ENCODE measurements at regions of chr7 and their contacts with region 1.

Region 1: GRCh38 chr7:47945261-47946001 is 2.8 kb downstream of the PKD1L1 start:
- DNase-seq: peak; percentile 42 to 79 (median 48)
- ATAC-seq: peak; percentile 85
- H3K4me3 ChIP-seq: no peak overlapping the region
- H3K27ac ChIP-seq: no peak overlapping the region
- H3K4me1 ChIP-seq: no peaks in the 10 kb centered on the region; a peak in 1 of 5 replicates
- H3K27me3 ChIP-seq: peaks cover 10 to 45% of the 10 kb centered on the region in 2 experiments; a peak in 4 of 5 replicates
- CTCF ChIP-seq: peak; percentile 62 to 79 (median 66)
- EP300 ChIP-seq: no peak
- POLR2A ChIP-seq: no peak
- RAD21 ChIP-seq: peak; percentile 84 to 89

Region 2: DNA sequence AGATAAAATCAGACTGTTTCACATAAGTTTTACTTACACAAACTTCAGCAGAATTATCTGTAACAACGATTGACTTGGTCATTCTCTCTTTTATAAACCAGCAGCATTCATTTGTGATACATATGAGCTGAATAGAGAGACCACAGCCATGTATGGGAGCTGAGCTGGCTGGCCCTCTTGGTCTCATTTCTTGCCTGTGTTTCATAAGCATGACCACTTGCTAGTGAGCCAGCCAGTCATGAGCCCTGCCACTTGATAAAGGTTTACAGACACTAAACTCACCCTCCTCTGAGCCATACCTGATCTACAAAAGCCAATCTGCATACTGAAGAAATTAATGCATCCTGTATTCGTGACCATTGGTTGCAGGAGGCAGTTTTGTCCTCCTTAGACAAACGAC is 79.3 kb before region 1 on chr7:
- CTCF ChIA-PET with region 1: no interaction called
- POLR2A ChIA-PET with region 1: no interaction called
- in situ Hi-C with region 1: no loop called
- intact Hi-C with region 1: no loop called
- DNase-seq: no peak
- ATAC-seq: no peak
- H3K4me3 ChIP-seq: no peak overlapping the region
- H3K27ac ChIP-seq: no peak overlapping the region
- H3K4me1 ChIP-seq: no peaks in the 10 kb centered on the region
- H3K27me3 ChIP-seq: peaks cover 3 to 11% of the 10 kb centered on the region in 2 experiments; a peak in 3 of 5 replicates
- CTCF ChIP-seq: no peak
- EP300 ChIP-seq: no peak
- POLR2A ChIP-seq: no peak
- RAD21 ChIP-seq: no peak

Region 3: DNA sequence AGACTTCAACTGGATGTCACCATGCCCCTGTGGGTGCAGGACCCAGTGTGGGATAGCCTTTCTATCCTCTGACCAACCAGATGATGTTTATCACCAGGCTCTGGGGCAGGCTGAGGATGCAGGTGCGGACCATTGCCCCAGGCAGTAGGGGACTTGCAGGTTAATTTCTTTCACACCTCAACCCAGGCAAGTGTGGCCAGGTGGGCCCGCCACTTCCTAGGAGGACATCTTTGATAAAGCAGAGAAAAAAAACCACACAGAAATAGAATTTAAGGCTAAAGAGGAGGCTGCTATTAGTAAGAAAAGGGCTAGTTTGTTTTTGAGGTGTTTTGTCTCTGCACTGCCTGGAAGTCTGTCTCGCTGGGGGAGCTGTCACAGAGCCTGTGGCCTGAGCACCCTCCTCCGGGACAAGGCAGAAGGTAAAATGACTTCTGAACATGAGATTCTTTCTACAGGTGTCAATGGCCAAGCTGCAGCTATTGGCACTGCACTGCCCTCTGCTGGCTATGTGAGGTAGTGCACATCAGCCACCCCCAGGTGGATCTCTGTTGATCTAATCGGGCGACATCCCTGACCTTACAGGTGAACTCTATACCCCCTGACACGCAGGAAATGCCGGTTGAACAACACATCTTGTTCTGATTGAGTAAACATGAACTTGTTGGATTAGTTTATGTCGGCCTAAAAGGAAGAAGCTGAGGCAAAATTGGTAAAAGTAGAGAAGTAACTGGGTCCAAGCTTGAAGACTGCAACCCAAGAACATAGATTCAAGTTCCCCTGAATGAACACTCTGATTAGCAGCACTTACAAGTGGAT is 164.6 kb after region 1 on chr7:
- CTCF ChIA-PET with region 1: interaction called, 39 read pairs
- POLR2A ChIA-PET with region 1: interaction called, 3 read pairs
- in situ Hi-C with region 1: loop called (anchors 5 kb)
- intact Hi-C with region 1: loop called (anchors 1 kb)
- DNase-seq: peak; percentile 67 to 84 (median 75)
- ATAC-seq: peak; percentile 82
- H3K4me3 ChIP-seq: no peak overlapping the region
- H3K27ac ChIP-seq: no peak overlapping the region
- H3K4me1 ChIP-seq: peaks cover 0 to 4% of the 10 kb centered on the region in 2 experiments; a peak in 1 of 5 replicates
- H3K27me3 ChIP-seq: peaks cover 0 to 33% of the 10 kb centered on the region in 2 experiments; a peak in 2 of 5 replicates
- CTCF ChIP-seq: peak; percentile 83 to 95 (median 90)
- EP300 ChIP-seq: no peak
- POLR2A ChIP-seq: no peak
- RAD21 ChIP-seq: peak; percentile 93 to 97

Region 4: DNA sequence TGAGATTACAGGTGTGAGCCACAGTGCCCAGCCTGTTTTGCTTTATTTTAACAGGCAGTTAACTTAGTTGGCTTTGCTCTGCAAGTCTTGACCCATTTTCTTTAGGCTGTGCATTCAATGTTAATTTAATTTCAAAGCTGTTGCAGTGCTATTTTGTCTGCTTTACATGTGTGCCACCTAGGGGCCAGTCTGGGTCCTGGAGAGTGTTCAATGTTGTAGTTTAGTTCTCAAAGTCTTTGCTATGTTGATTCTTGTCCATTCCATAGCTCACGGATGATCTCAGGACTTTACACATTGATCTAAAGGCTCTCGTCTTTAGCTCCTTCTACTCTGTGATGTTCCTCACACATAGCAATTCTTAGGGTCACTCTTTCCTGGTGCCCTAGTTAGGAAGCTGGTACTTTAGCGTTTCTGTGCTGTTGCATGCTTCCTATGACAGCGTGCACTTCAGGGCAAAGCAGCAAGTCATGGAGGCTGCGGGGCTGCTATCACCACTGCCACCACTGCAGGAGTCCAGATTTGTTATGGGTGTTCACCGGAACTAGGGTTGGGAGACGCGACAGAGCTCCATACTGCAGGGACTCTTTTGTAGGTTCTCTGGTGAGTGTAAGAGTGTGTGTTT is 209.5 kb after region 1 on chr7:
- CTCF ChIA-PET with region 1: interaction called, 8 read pairs
- POLR2A ChIA-PET with region 1: no interaction called
- in situ Hi-C with region 1: no loop called
- intact Hi-C with region 1: loop called (anchors 5 kb)
- DNase-seq: peak in 2 of 4 experiments; percentile 9 to 26
- ATAC-seq: peak; percentile 75
- H3K4me3 ChIP-seq: no peak overlapping the region
- H3K27ac ChIP-seq: no peak overlapping the region
- H3K4me1 ChIP-seq: no peaks in the 10 kb centered on the region
- H3K27me3 ChIP-seq: no peaks in the 10 kb centered on the region
- CTCF ChIP-seq: peak; percentile 34 to 54 (median 34); a peak in 5 of 6 replicates
- EP300 ChIP-seq: no peak
- POLR2A ChIP-seq: no peak
- RAD21 ChIP-seq: peak; percentile 16 to 55; a peak in 2 of 4 replicates

Region 5: GRCh38 chr7:49852619-49853462 is 1907.4 kb after region 1 on chr7:
- CTCF ChIA-PET with region 1: no interaction called
- POLR2A ChIA-PET with region 1: no interaction called
- in situ Hi-C with region 1: no loop called
- intact Hi-C with region 1: loop called (anchors 5 kb)
- DNase-seq: peak; percentile 23 to 46 (median 35)
- ATAC-seq: peak; percentile 78
- H3K4me3 ChIP-seq: no peak overlapping the region
- H3K27ac ChIP-seq: no peak overlapping the region
- H3K4me1 ChIP-seq: no peaks in the 10 kb centered on the region
- H3K27me3 ChIP-seq: no peaks in the 10 kb centered on the region
- CTCF ChIP-seq: peak; percentile 55 to 70 (median 69)
- EP300 ChIP-seq: no peak
- POLR2A ChIP-seq: no peak
- RAD21 ChIP-seq: peak; percentile 48 to 80